ENCODE measurements at regions of chr9 and their contacts with region 1.

Region 1: DNA sequence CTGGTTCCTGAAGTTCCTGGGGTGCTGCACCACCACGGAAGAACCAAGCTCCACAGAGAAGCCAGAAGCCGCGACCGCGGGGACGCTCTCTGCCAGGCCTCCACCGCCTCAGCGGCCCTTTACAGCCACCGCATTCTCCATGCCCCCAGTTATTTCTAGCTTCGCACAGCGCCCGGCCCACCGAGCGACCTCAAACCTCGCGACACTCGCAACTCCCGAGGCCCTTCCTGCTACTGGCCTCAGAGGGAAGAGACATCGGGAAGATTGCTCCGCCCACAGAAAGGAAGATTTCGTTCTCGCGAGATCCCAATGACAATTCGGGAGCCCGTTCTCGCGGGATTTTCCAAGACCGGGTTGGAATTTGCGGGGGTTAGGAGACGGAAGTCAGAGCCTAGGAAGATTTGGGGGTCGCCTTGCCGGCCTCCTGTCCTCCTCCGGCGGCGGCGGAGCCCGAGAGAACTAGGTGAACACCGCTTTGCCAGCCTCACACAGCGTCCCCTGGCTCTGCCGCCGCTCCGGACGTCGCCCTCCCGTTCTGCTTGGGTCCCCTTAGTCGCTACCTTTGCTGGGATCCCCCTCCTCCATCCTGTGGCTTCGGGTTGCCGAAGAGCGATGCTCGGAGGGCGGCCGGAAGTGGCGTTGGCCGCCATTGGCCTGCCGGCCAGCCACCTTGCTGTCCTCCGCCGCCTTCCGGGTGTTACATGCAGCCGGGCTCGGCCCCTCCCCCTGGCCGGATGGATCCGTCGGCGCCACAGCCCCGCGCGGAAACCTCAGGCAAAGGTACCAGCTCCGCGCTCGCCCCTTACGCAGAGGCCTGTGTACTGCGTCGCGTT is at the start of gene ERCC6L2:
- DNase-seq: peak; percentile 90 to 92 (median 90)
- H3K4me3 ChIP-seq: no peak within 1 kb of the TSS
- H3K4me3 Mint-ChIP-seq: no peak within 1 kb of the TSS
- H3K27ac ChIP-seq: no peak within 1 kb of the TSS
- H3K27ac Mint-ChIP-seq: no peak within 1 kb of the TSS
- H3K4me1 ChIP-seq: peaks cover 28% of the 10 kb centered on the region
- H3K4me1 Mint-ChIP-seq: peaks cover 25 to 31% (median 28%) of the 10 kb centered on the region in 4 donors
- H3K27me3 ChIP-seq: no peaks in the 10 kb centered on the region
- H3K27me3 Mint-ChIP-seq: no peaks in the 10 kb centered on the region
- total RNA-seq, gene ERCC6L2: 54.3 to 57.2 TPM

Region 2: DNA sequence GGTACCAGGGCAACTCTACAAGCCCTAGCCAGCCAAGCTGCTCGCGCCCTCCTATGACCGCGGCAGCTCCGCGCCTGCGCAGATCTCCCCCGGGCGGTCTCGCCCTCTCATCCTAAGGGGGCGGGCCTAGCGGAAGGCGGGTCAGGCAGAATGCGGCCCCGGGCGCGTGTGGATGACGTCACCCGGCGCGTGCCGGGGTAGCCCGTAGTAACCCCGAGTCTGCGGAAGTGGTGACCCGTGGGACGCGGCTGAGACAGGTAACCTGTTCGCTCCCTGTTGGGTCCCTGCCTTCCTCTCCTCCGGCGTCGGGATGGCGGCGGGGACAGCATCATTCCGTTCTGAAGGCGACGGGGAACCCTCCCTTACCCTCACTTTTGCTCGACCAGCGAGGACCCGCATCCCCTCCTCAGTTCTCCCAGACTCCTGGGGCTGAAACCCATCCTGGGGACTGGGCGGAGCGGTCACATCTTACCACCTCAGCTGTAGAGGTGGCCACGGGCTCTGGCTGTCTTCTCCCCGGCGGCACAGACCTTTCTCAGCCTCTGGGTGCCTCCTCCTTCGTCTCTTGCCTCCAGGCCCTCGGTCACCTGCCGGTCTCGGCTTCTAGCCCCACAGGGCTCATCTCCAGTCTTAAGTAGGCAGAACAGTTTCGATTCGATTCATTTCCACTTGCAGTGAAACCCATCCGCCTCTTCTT is 1148.9 kb before region 1 on chr9 and contains the start of gene AOPEP:
- CTCF ChIA-PET with region 1: no interaction called
- POLR2A ChIA-PET with region 1: no interaction called
- intact Hi-C with region 1: loop called (anchors 1 kb)
- DNase-seq: peak; percentile 97 to 99 (median 99)
- H3K4me3 ChIP-seq: peak within 1 kb of the TSS; percentile 84 to 98
- H3K4me3 Mint-ChIP-seq: peak within 1 kb of the TSS; percentile 96 to 99 (median 98)
- H3K27ac ChIP-seq: peak within 1 kb of the TSS; percentile 63
- H3K27ac Mint-ChIP-seq: peak within 1 kb of the TSS; percentile 94 to 100 (median 99)
- H3K4me1 ChIP-seq: peaks cover 13% of the 10 kb centered on the region
- H3K4me1 Mint-ChIP-seq: peaks cover 12 to 24% (median 17%) of the 10 kb centered on the region in 4 donors
- H3K27me3 ChIP-seq: no peaks in the 10 kb centered on the region
- H3K27me3 Mint-ChIP-seq: no peaks in the 10 kb centered on the region
- total RNA-seq, gene AOPEP: 11.6 to 11.7 TPM

Region 3: DNA sequence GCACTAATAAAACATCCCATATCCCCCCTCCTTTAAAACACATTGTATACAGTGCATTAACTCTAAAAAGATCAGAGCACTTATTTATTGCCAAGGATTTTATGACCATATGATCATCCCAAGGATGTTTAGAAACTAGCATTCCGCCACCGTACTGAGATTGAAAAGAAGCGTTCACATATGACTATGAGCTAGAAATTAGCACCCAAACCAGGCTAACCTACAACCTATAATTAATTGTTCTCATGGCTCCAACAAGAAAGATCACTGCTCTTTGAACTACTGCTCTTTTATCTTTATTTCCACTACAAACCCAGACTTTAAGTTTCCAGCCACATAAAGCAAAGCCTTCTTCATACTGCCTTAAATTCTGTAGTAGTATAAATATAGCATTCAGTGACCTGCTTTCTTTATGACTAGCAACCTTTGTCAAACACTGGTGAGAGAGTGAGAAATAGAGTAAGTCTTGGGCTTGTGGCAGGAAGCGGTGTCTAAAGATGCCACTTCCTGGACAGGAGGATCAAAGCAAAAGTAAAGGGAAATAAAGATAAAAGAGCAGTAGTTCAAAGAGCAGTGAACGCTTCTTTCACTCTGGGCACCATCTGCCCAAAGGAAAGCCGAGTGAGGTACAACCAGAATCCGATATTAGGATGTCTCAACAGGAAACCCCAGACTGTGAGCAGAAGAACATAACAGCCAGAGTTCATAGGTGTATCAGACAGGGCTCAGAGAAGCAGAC is 151.1 kb before region 1 on chr9:
- CTCF ChIA-PET with region 1: no interaction called
- POLR2A ChIA-PET with region 1: interaction called, 4 read pairs
- intact Hi-C with region 1: loop called (anchors 2 kb)
- DNase-seq: peak; percentile 84 to 93 (median 89)
- H3K4me3 ChIP-seq: no peak overlapping the region
- H3K4me3 Mint-ChIP-seq: peak overlapping the region; percentile 8 to 73 (median 40)
- H3K27ac ChIP-seq: no peak overlapping the region
- H3K27ac Mint-ChIP-seq: peak overlapping the region; percentile 69 to 92 (median 88)
- H3K4me1 ChIP-seq: peaks cover 34% of the 10 kb centered on the region
- H3K4me1 Mint-ChIP-seq: peaks cover 29 to 49% (median 33%) of the 10 kb centered on the region in 4 donors
- H3K27me3 ChIP-seq: no peaks in the 10 kb centered on the region
- H3K27me3 Mint-ChIP-seq: peaks cover 0 to 2% of the 10 kb centered on the region in 2 donors

Region 4: DNA sequence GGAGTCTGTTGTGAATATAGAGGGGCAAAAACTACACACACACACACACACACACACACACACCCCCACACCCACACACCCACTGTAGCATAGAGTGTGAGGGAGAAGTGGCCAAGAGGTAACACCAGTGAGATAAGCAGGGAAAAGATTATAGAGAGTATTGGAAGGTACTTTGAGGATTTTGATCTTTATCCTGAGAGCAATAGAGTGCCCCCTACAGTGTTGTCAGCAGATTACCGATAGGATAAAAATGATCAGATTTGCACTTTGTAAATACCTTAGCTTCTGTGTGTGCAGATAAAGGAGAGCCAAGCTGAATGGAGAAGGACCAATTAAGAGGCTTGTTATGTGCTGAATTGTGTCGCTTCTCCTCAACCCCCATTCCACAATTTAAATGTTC is 32.3 kb after region 1 on chr9:
- CTCF ChIA-PET with region 1: no interaction called
- POLR2A ChIA-PET with region 1: interaction called, 8 read pairs
- intact Hi-C with region 1: loop called (anchors 2 kb)
- DNase-seq: peak in 1 of 5 donors; percentile 7
- H3K4me3 ChIP-seq: no peak overlapping the region
- H3K4me3 Mint-ChIP-seq: no peak overlapping the region
- H3K27ac ChIP-seq: no peak overlapping the region
- H3K27ac Mint-ChIP-seq: no peak overlapping the region
- H3K4me1 ChIP-seq: no peaks in the 10 kb centered on the region
- H3K4me1 Mint-ChIP-seq: peaks cover 0 to 12% (median 7%) of the 10 kb centered on the region in 4 donors
- H3K27me3 ChIP-seq: no peaks in the 10 kb centered on the region
- H3K27me3 Mint-ChIP-seq: no peaks in the 10 kb centered on the region

Region 5: GRCh38 chr9:96020792-96021550 is 145.4 kb after region 1 on chr9:
- CTCF ChIA-PET with region 1: no interaction called
- POLR2A ChIA-PET with region 1: interaction called, 10 read pairs
- intact Hi-C with region 1: no loop called
- DNase-seq: peak in 4 of 5 donors; percentile 43 to 55 (median 48)
- H3K4me3 ChIP-seq: peak overlapping the region in 1 of 2 donors; percentile 52
- H3K4me3 Mint-ChIP-seq: peak overlapping the region; percentile 81 to 93 (median 86)
- H3K27ac ChIP-seq: peak overlapping the region; percentile 58
- H3K27ac Mint-ChIP-seq: peak overlapping the region; percentile 72 to 95 (median 86)
- H3K4me1 ChIP-seq: peaks cover 56% of the 10 kb centered on the region
- H3K4me1 Mint-ChIP-seq: peaks cover 44 to 85% (median 60%) of the 10 kb centered on the region in 4 donors
- H3K27me3 ChIP-seq: no peaks in the 10 kb centered on the region
- H3K27me3 Mint-ChIP-seq: peaks cover 0 to 6% of the 10 kb centered on the region in 2 donors

Measured in CD4-positive, alpha-beta memory T cell (primary cell).